Transverse colon (tissue), 4 donors: ENCODE measurements at regions of chr1 and their contacts with region 1.

Region 1: DNA sequence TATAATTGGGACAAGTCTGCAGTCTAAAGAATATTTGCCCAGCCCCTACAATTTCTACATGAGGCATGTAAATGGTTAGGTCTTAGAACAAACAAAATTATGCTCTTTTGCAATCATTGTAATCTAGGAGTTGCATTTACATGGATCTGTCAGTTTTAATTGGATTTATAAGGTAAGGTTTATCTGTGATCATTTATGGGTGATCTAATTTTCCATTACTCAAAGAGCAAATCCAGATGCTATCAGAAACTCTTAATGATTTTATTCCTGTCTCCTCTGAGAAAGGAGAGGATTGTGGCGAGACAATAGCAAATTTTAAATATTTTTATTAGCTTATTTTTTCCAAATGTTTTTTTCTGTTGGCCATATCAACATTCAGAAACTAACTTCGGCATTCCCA is 14.1 kb upstream of the NEGR1 start:
- DNase-seq: no peak
- H3K4me3 ChIP-seq: no peak overlapping the region
- H3K27ac ChIP-seq: no peak overlapping the region
- H3K4me1 ChIP-seq: no peaks in the 10 kb centered on the region
- H3K27me3 ChIP-seq: no peaks in the 10 kb centered on the region
- CTCF ChIP-seq: no peak
- EP300 ChIP-seq: no peak
- POLR2A ChIP-seq: no peak

Region 2: GRCh38 chr1:71593523-71593922 is 703.0 kb before region 1 on chr1:
- in situ Hi-C with region 1: no loop called
- intact Hi-C with region 1: no loop called
- DNase-seq: no peak
- H3K4me3 ChIP-seq: no peak overlapping the region
- H3K27ac ChIP-seq: no peak overlapping the region
- H3K4me1 ChIP-seq: peaks cover 0 to 4% (median 1%) of the 10 kb centered on the region in 4 donors
- H3K27me3 ChIP-seq: no peaks in the 10 kb centered on the region
- CTCF ChIP-seq: no peak
- EP300 ChIP-seq: no peak
- POLR2A ChIP-seq: no peak

Region 3: GRCh38 chr1:72341661-72342060 is 45.2 kb after region 1 on chr1:
- in situ Hi-C with region 1: loop called in 1 of 4 experiments (anchors 5 kb)
- intact Hi-C with region 1: no loop called
- DNase-seq: no peak
- H3K4me3 ChIP-seq: no peak overlapping the region
- H3K27ac ChIP-seq: no peak overlapping the region
- H3K4me1 ChIP-seq: no peaks in the 10 kb centered on the region
- H3K27me3 ChIP-seq: no peaks in the 10 kb centered on the region
- CTCF ChIP-seq: no peak
- EP300 ChIP-seq: no peak
- POLR2A ChIP-seq: no peak

Region 4: GRCh38 chr1:72357411-72357810 is 60.9 kb after region 1 on chr1:
- in situ Hi-C with region 1: loop called in 1 of 4 experiments (anchors 10 kb)
- intact Hi-C with region 1: no loop called
- DNase-seq: no peak
- H3K4me3 ChIP-seq: no peak overlapping the region
- H3K27ac ChIP-seq: no peak overlapping the region
- H3K4me1 ChIP-seq: no peaks in the 10 kb centered on the region
- H3K27me3 ChIP-seq: no peaks in the 10 kb centered on the region
- CTCF ChIP-seq: no peak
- EP300 ChIP-seq: no peak
- POLR2A ChIP-seq: no peak

Region 5: DNA sequence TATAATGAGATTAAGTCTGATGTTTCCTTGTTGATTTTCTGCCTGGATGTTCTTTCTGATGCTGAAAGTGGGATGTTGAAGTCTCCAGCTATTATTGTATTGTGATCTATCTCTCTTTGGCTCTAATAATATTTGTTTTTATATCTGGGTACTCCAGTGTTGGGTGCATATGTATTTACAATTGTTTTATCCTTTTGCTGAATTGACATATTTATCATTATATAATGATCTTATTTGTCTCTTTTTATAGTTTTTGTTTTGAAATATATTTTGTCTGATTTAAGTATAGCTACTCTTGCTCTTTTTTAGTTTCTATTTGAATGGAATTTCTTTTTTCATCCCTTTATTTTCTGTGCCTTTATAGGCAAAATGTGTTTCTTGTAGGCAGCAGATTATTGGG is 508.1 kb after region 1 on chr1:
- in situ Hi-C with region 1: no loop called
- intact Hi-C with region 1: no loop called
- DNase-seq: no peak
- H3K4me3 ChIP-seq: no peak overlapping the region
- H3K27ac ChIP-seq: no peak overlapping the region
- H3K4me1 ChIP-seq: no peaks in the 10 kb centered on the region
- H3K27me3 ChIP-seq: no peaks in the 10 kb centered on the region
- CTCF ChIP-seq: no peak
- EP300 ChIP-seq: no peak
- POLR2A ChIP-seq: no peak